Endothelial cell of umbilical vein (primary cell): ENCODE measurements at regions of chr13 and their contacts with region 1.

Region 1: GRCh38 chr13:98509271-98510155 is 67.4 kb downstream of the STK24 start:
- DNase-seq: peak; percentile 95
- H3K4me3 ChIP-seq: peak overlapping the region in 1 of 3 experiments; percentile 12
- H3K27ac ChIP-seq: peak overlapping the region; percentile 95
- H3K4me1 ChIP-seq: peaks cover 64% of the 10 kb centered on the region
- H3K27me3 ChIP-seq: no peaks in the 10 kb centered on the region
- CTCF ChIP-seq: no peak
- POLR2A ChIP-seq: no peak

Region 2: DNA sequence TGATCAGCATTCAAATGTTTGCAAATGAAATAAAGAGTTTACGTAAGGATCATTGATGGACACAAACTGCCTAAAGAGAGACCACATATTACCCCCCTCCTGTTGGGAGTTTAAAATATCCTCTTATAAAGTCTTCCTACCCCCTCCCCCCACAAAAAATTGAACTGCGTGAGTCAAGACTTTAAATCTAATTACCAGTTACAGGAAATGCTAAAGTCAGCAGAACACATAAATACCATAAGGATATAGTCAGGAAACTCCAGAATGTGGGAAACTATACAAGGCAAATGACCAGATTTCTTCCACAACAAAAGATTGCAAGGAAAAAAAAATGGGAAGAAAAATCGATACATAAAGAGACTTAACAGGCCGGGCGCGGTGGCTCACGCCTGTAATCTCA is 411.0 kb before region 1 on chr13:
- CTCF ChIA-PET with region 1: no interaction called
- POLR2A ChIA-PET with region 1: no interaction called
- dilution Hi-C with region 1: no loop called
- intact Hi-C with region 1: no loop called
- DNase-seq: no peak
- H3K4me3 ChIP-seq: no peak overlapping the region
- H3K27ac ChIP-seq: no peak overlapping the region
- H3K4me1 ChIP-seq: no peaks in the 10 kb centered on the region
- H3K27me3 ChIP-seq: no peaks in the 10 kb centered on the region
- CTCF ChIP-seq: no peak
- POLR2A ChIP-seq: no peak

Region 3: DNA sequence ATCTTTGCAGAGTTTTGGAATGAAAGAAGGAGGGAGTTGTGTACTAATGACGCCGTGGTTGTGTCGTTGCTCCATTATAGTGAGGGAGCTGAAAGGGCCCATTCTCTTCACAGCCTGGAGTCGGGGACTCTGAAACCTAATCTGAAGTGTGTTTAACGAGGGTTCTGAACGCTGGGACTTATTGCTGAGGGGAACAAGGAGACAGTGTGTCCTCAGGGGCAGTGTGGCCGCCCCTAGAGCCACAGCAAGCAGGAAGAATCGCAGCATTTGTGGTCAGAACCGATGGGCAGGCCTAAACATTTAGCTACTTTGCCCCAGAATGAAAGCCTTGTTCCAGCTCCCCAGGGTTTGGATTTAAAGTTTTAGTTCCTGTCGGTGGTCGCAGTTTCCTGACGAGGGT is 176.0 kb before region 1 on chr13:
- CTCF ChIA-PET with region 1: no interaction called
- POLR2A ChIA-PET with region 1: no interaction called
- dilution Hi-C with region 1: no loop called
- intact Hi-C with region 1: no loop called
- DNase-seq: no peak
- H3K4me3 ChIP-seq: no peak overlapping the region
- H3K27ac ChIP-seq: no peak overlapping the region
- H3K4me1 ChIP-seq: no peaks in the 10 kb centered on the region
- H3K27me3 ChIP-seq: no peaks in the 10 kb centered on the region
- CTCF ChIP-seq: no peak
- POLR2A ChIP-seq: no peak

Region 4: DNA sequence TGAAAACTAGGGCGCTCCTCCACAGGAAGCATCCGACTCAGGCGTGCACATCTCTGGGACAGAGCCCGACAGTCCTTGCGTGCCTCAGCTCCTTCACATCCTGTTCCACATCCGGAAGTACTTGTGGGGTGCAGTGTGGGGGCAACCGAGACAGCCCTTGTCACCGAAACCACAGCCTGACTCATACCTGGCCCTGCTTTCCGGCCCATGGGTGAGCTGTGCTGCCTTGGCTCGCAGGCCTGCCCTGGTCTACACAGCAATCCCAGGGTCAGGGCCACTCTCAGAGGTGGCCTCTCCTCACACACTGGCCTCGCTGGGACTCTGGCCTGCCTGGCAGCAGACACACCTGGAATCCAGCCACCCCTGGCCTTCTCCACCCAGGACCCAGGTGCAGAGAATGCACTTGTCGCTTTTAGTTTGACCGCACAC is 33.0 kb before region 1 on chr13:
- CTCF ChIA-PET with region 1: interaction called, 4 read pairs
- POLR2A ChIA-PET with region 1: interaction called, 4 read pairs
- dilution Hi-C with region 1: no loop called
- intact Hi-C with region 1: loop called (anchors 1 kb)
- DNase-seq: peak; percentile 82
- H3K4me3 ChIP-seq: peak overlapping the region in 1 of 3 experiments; percentile 24
- H3K27ac ChIP-seq: peak overlapping the region; percentile 91
- H3K4me1 ChIP-seq: peaks cover 35% of the 10 kb centered on the region
- H3K27me3 ChIP-seq: no peaks in the 10 kb centered on the region
- CTCF ChIP-seq: no peak
- POLR2A ChIP-seq: peak; percentile 52

Region 5: DNA sequence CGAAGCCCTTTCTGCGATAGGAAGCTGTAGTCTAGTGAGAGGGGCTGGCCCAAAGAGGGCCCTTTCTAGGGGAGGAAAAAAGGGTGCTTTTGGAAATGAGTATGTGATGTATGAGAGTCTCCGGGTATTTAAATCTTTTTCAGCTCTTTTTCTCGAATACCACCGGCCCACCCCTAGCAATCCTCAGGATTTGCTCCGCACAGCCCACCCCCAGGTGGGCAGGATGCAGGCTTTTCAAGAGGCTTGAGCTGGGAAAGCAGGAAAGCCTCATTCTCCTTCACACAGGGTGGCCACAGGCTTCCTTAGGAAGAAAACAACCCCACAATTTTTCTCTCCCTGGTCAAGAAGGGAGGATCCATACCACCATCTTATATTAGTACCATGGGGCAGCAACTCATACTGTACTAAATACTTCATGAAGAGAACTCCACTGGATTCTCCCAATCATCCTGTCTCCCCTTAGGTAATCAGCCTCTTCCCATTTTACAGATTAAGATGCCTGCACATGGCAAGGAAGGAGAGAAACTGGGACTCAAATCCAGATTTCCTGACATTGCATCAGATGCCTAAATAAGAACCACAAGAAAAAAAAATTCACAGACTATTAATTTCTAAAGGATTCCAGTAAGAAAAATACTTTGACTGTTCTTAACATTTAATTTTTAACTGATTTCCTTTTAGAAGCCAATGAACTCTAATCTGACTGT is 17.0 kb before region 1 on chr13:
- CTCF ChIA-PET with region 1: interaction called, 7 read pairs
- POLR2A ChIA-PET with region 1: no interaction called
- dilution Hi-C with region 1: no loop called
- intact Hi-C with region 1: loop called (anchors 1 kb)
- DNase-seq: no peak
- H3K4me3 ChIP-seq: no peak overlapping the region
- H3K27ac ChIP-seq: no peak overlapping the region
- H3K4me1 ChIP-seq: peaks cover 21% of the 10 kb centered on the region
- H3K27me3 ChIP-seq: no peaks in the 10 kb centered on the region
- CTCF ChIP-seq: no peak
- POLR2A ChIP-seq: no peak

Region 6: GRCh38 chr13:98565726-98566565 is 56.4 kb after region 1 on chr13:
- CTCF ChIA-PET with region 1: interaction called, 3 read pairs
- POLR2A ChIA-PET with region 1: no interaction called
- dilution Hi-C with region 1: no loop called
- intact Hi-C with region 1: loop called (anchors 2 kb)
- DNase-seq: peak; percentile 80
- H3K4me3 ChIP-seq: peak overlapping the region in 1 of 3 experiments; percentile 16
- H3K27ac ChIP-seq: peak overlapping the region; percentile 80
- H3K4me1 ChIP-seq: peaks cover 33% of the 10 kb centered on the region
- H3K27me3 ChIP-seq: no peaks in the 10 kb centered on the region
- CTCF ChIP-seq: no peak
- POLR2A ChIP-seq: no peak

Region 7: GRCh38 chr13:98576963-98577822 is 67.7 kb after region 1 on chr13 and contains the start of gene STK24:
- CTCF ChIA-PET with region 1: no interaction called
- POLR2A ChIA-PET with region 1: interaction called, 3 read pairs
- dilution Hi-C with region 1: loop called (anchors 10 kb)
- intact Hi-C with region 1: loop called (anchors 1 kb)
- DNase-seq: peak; percentile 78
- H3K4me3 ChIP-seq: peak within 1 kb of the TSS; percentile 84 to 98 (median 98)
- H3K27ac ChIP-seq: peak within 1 kb of the TSS; percentile 95
- H3K4me1 ChIP-seq: peaks cover 20% of the 10 kb centered on the region
- H3K27me3 ChIP-seq: no peaks in the 10 kb centered on the region
- CTCF ChIP-seq: no peak
- POLR2A ChIP-seq: peak; percentile 73
- total RNA-seq, gene STK24: 99.4 and 100 TPM in 2 replicates